GM12878 (cell line): ENCODE measurements at regions of chr7 and their contacts with region 1.

Region 1: GRCh38 chr7:120792091-120792860 is 65.7 kb downstream of the TSPAN12 start:
- DNase-seq: peak; percentile 24
- ATAC-seq: peak; percentile 96
- H3K4me3 ChIP-seq: no peak overlapping the region
- H3K27ac ChIP-seq: no peak overlapping the region
- H3K4me1 ChIP-seq: no peaks in the 10 kb centered on the region
- H3K27me3 ChIP-seq: no peaks in the 10 kb centered on the region
- CTCF ChIP-seq: peak; percentile 84 to 97 (median 95)
- EP300 ChIP-seq: no peak
- POLR2A ChIP-seq: no peak
- RAD21 ChIP-seq: peak; percentile 70

Region 2: DNA sequence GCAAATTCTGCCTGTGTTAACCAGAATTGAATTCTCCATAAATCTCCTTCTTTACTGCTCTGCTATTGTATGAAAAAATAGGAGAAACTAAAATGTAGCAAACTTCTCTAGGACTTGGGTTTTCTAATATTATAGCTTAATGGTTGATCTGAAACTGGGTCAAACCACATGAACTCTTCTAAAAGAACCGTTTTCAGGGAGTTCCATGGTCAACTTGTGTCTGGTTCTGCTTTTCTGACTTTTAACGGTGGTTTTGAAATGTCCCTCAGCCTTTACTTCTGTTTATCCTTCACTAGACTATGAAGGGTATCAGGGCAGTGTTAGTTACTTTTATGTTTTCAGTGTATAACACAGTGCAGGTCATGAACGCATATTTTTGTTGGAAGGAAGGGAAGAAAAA is 176.6 kb before region 1 on chr7:
- CTCF ChIA-PET with region 1: no interaction called
- POLR2A ChIA-PET with region 1: no interaction called
- RAD21 ChIA-PET with region 1: no interaction called
- SMC1A ChIA-PET with region 1: no interaction called
- in situ Hi-C with region 1: no loop called
- intact Hi-C with region 1: no loop called
- DNase-seq: peak; percentile 17
- ATAC-seq: peak; percentile 89
- H3K4me3 ChIP-seq: no peak overlapping the region
- H3K27ac ChIP-seq: no peak overlapping the region
- H3K4me1 ChIP-seq: peaks cover 10% of the 10 kb centered on the region
- H3K27me3 ChIP-seq: no peaks in the 10 kb centered on the region
- CTCF ChIP-seq: no peak
- EP300 ChIP-seq: peak in 1 of 2 experiments; percentile 40; a peak in 1 of 4 replicates
- POLR2A ChIP-seq: no peak
- RAD21 ChIP-seq: no peak

Region 3: DNA sequence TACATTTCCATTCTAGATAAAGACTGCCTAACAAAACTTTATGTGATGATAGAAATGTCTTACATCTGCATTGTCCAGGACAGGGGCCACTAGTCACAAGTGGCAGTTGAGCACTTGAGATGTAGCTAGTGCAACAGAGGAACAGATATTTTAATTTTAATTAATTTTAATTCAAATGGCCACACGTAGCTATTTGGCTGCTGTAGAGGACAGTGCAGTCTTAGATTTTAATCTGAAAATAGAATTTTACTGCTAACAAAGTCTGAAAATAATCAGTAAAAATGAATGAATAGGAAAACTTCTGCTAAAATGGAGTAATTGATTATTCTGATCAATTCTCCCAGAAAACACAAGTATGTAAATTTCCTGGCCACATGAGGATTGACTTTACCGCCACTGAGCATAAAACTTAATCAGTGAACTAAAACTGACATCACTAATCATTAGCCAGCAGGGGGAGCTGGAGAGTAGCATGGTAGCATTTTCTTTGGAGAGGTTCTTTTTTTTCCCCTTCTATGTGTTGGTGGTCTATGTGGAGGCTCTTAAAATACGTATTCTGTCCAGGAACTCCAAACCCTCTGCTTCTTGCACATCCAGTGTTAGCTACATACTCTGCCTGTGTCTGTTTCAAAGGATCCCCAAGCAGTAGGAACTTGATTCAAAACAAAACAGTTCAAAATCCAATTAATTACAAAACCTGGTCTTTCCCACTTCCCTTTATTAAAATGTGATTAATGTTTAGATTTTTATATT is 13.5 kb after region 1 on chr7:
- CTCF ChIA-PET with region 1: interaction called, 104 read pairs
- POLR2A ChIA-PET with region 1: interaction called, 3 read pairs
- RAD21 ChIA-PET with region 1: interaction called, 28 read pairs
- SMC1A ChIA-PET with region 1: interaction called, 83 read pairs
- in situ Hi-C with region 1: no loop called
- intact Hi-C with region 1: no loop called
- DNase-seq: peak; percentile 53
- ATAC-seq: peak; percentile 85
- H3K4me3 ChIP-seq: no peak overlapping the region
- H3K27ac ChIP-seq: no peak overlapping the region
- H3K4me1 ChIP-seq: no peaks in the 10 kb centered on the region
- H3K27me3 ChIP-seq: no peaks in the 10 kb centered on the region
- CTCF ChIP-seq: peak; percentile 74 to 86 (median 82)
- EP300 ChIP-seq: no peak
- POLR2A ChIP-seq: no peak
- RAD21 ChIP-seq: peak; percentile 84

Region 4: DNA sequence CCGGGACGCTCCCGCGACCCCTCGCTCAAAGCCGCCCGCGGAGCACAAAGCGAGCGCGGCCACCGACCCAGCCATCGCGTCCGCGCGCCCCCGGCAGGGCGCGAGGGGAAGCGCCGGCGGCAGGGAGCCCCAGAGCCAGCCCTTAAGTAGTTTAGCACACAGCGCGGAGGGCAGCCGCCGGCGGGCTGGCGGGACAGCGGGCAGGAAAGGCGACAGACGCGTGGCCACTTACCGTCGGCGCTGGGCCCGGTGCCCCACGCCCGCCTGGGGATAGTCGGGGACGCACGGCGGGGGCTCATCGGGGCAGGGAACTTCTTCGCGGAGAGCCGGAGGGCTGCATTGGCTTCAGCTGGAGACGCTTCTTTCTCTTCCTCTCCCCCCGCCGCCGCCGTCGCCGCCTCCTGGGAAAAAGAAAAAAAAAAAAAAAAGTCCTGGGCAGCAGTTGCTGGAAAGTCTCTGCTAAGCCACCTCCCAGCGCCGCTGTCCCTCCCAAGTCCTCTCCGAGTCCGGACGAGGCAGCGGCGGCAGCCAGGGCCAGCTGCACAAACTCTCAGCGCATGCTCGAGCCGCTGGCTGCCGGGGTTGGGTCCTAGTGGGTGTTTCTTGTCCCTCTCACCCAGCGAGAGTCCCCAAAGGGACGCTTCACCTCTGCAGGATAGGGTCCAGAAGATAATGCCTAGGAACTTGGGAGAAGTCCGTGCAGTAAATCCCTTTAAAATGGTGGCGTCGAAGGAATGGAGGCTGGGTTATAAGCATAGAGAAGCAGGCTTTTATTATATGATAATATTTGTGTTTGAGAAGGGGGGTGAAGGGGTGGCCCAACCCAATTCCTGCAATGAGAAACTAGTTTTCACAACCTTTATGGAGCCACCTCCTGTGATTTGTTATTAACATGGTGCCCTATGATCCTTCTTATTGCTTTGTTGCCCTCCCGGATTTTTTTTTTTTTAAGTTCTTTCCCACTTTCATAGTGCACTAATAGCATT is 65.6 kb after region 1 on chr7 and contains the start of gene TSPAN12:
- CTCF ChIA-PET with region 1: interaction called, 18 read pairs
- POLR2A ChIA-PET with region 1: interaction called, 4 read pairs
- RAD21 ChIA-PET with region 1: interaction called, 8 read pairs
- SMC1A ChIA-PET with region 1: interaction called, 8 read pairs
- in situ Hi-C with region 1: no loop called
- intact Hi-C with region 1: loop called (anchors 2 kb)
- DNase-seq: no peak
- ATAC-seq: peak; percentile 81
- H3K4me3 ChIP-seq: peak within 1 kb of the TSS; percentile 70
- H3K27ac ChIP-seq: 0 out of 2 replicates have a peak within 1 kb of the TSS, but pooled peaks have one; percentile 46
- H3K4me1 ChIP-seq: no peaks in the 10 kb centered on the region
- H3K27me3 ChIP-seq: peaks cover 0 to 4% of the 10 kb centered on the region in 2 experiments; a peak in 1 of 4 replicates
- CTCF ChIP-seq: peak; percentile 67 to 79 (median 75); a peak in 5 of 6 replicates
- EP300 ChIP-seq: no peak
- POLR2A ChIP-seq: peak; percentile 66
- RAD21 ChIP-seq: peak; percentile 61
- polyA plus RNA-seq, gene TSPAN12: 0.75 to 1.3 TPM

Region 5: DNA sequence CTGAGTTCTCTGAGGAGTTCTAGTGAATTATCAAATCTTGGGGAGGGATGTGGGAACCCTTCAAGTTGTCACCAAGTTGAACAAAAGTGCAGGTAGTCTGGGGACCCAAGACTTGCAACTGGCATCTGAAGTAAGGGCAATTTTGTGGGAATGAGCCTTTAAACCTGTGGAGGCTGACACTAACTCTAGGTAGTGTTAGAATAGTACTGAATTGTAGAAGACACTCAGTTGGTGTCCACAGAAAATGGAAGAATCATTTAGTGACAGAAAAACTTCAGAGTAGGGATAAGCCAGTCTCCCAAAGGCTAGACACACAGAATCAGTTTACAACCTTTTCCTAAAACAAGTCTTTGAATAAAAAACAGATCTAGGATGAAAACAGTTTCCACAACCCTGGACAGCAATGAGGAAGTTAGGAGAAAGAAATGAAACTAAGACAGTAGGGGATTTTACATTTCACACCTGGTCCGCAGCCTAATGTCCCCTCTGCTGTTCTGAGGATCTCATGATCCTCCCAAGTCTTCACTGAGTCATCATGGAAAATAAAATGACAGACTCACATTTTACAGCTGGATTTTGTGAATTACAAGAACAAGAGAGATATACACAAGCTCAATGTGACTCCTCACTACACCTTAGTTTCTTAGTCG is 135.3 kb after region 1 on chr7:
- CTCF ChIA-PET with region 1: interaction called, 21 read pairs
- POLR2A ChIA-PET with region 1: interaction called, 3 read pairs
- RAD21 ChIA-PET with region 1: interaction called, 7 read pairs
- SMC1A ChIA-PET with region 1: interaction called, 17 read pairs
- in situ Hi-C with region 1: no loop called
- intact Hi-C with region 1: no loop called
- DNase-seq: peak; percentile 46
- ATAC-seq: peak; percentile 90
- H3K4me3 ChIP-seq: no peak overlapping the region
- H3K27ac ChIP-seq: peak overlapping the region; percentile 46; the same call in 1 of the 2 replicates
- H3K4me1 ChIP-seq: peaks cover 4% of the 10 kb centered on the region; the same call in 1 of the 2 replicates
- H3K27me3 ChIP-seq: no peaks in the 10 kb centered on the region
- CTCF ChIP-seq: no peak
- EP300 ChIP-seq: 0 out of 4 replicates have a peak, but pooled peaks of 1 of the 2 experiments have one; percentile 40
- POLR2A ChIP-seq: no peak
- RAD21 ChIP-seq: no peak

Region 6: DNA sequence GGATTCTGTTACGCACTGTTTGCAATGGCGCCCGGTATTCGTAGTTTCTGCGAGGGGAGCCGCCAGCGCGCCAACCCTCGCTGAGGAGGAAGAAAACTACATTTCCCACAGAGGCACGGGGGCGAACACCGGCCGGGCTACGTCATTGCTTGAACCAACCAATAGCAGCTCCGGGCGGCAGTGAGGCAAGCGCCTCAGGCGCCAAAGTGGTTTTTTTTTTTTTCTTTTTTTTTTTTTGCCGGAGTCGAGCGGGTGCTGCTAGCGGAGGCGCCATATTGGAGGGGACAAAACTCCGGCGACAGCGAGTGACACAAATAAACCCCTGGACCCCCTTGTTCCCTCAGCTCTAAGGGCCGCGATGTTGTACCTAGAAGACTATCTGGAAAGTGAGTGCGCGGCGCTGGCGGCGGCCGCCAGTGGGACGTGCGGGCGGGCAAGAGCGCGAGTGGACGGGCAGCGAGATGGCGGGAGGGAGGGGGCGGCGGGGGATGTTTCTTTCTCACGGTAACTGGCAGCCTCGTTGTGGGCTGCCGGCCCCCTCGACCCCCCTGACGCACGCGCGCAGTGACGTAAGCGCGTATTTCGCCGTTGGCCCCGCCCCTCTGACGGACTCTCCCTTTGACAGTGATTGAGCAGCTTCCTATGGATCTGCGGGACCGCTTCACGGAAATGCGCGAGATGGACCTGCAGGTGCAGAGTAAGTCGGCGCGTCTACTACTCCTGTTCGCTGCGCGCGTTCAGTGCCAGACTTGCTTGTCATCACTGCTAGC is 158.4 kb after region 1 on chr7 and contains the start of gene ING3:
- CTCF ChIA-PET with region 1: interaction called, 23 read pairs
- POLR2A ChIA-PET with region 1: interaction called, 14 read pairs
- RAD21 ChIA-PET with region 1: interaction called, 11 read pairs
- SMC1A ChIA-PET with region 1: interaction called, 11 read pairs
- in situ Hi-C with region 1: no loop called
- intact Hi-C with region 1: no loop called
- DNase-seq: peak; percentile 92
- ATAC-seq: peak; percentile 93
- H3K4me3 ChIP-seq: peak within 1 kb of the TSS; percentile 90
- H3K27ac ChIP-seq: peak within 1 kb of the TSS; percentile 97
- H3K4me1 ChIP-seq: 0 out of 2 replicates have a peak, but pooled peaks cover 5% of the 10 kb centered on the region
- H3K27me3 ChIP-seq: no peaks in the 10 kb centered on the region
- CTCF ChIP-seq: no peak
- EP300 ChIP-seq: 0 out of 4 replicates have a peak, but pooled peaks of 1 of the 2 experiments have one; percentile 15
- POLR2A ChIP-seq: peak; percentile 89
- RAD21 ChIP-seq: no peak
- polyA plus RNA-seq, gene ING3: 44.3 to 60.8 TPM

Region 7: DNA sequence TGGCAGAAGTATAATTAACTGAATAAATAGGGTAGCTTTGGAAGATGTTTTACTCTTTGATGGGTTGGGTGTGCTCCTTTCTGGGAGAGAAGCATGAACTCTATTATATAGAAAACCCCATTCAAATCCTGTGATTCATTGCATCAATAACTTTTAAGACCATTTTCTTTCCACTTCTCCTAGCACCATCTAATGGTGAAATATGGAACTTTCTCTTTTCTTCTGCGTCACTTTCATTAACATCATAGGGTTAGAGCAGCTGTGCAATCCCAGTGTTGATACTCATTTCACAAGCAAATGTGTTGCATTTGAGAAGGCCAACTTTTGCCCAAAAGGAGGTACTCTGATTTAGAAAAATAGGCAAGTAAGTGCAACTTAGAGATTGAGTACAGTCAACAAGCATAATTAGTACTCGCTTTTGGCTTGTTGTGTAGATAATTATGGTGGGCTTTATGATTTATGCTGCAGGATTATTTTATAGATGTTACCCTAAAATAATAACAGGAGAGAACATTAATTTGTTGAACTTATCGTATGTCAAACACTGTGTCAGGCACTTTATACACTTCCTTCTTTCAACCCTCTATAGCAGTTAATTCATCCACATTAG is 289.2 kb after region 1 on chr7:
- CTCF ChIA-PET with region 1: interaction called, 28 read pairs
- POLR2A ChIA-PET with region 1: no interaction called
- RAD21 ChIA-PET with region 1: interaction called, 3 read pairs
- SMC1A ChIA-PET with region 1: interaction called, 5 read pairs
- in situ Hi-C with region 1: loop called (anchors 5 kb)
- intact Hi-C with region 1: loop called (anchors 5 kb)
- DNase-seq: peak; percentile 5
- ATAC-seq: peak; percentile 81
- H3K4me3 ChIP-seq: no peak overlapping the region
- H3K27ac ChIP-seq: no peak overlapping the region
- H3K4me1 ChIP-seq: no peaks in the 10 kb centered on the region
- H3K27me3 ChIP-seq: peaks cover 0 to under 1% of the 10 kb centered on the region in 2 experiments; a peak in 2 of 4 replicates
- CTCF ChIP-seq: peak; percentile 57 to 72 (median 57); a peak in 5 of 6 replicates
- EP300 ChIP-seq: no peak
- POLR2A ChIP-seq: no peak
- RAD21 ChIP-seq: peak; percentile 77